K562 (cell line): ENCODE measurements at regions of chr1 and their contacts with region 1.

Region 1: DNA sequence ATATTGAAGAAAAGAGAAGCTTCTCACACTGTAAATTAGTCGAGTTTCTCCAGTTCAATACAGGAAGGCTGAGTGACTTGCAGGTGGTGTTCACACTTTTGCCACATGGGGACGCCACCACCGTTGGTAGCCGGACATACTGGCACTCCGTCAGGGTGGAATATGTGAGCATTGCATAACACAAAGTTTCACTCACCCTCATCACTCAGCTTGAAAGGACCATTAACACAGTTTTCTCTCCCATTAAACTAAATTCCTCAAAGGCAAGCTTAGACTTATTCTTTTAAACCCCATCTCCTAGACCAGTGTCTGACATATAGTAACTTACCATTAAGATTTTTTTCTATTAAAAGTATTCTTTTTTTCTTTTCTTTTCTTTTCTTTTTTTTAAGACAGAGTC is 105.3 kb upstream of the SERBP1 start:
- DNase-seq: peak; percentile 71 to 87 (median 75)
- ATAC-seq: peak; percentile 83
- H3K4me3 ChIP-seq: no peak overlapping the region
- H3K27ac ChIP-seq: no peak overlapping the region
- H3K4me1 ChIP-seq: peaks cover 14 to 18% of the 10 kb centered on the region in 2 experiments; a peak in 4 of 5 replicates
- H3K27me3 ChIP-seq: no peaks in the 10 kb centered on the region
- CTCF ChIP-seq: peak; percentile 93 to 99 (median 96)
- EP300 ChIP-seq: 0 out of 2 replicates have a peak, but pooled peaks have one; percentile 35
- POLR2A ChIP-seq: no peak
- RAD21 ChIP-seq: peak; percentile 88 to 97

Region 2: GRCh38 chr1:67285780-67286488 is 249.5 kb before region 1 on chr1:
- CTCF ChIA-PET with region 1: no interaction called
- POLR2A ChIA-PET with region 1: no interaction called
- in situ Hi-C with region 1: no loop called
- intact Hi-C with region 1: no loop called
- DNase-seq: no peak
- ATAC-seq: no peak
- H3K4me3 ChIP-seq: no peak overlapping the region
- H3K27ac ChIP-seq: no peak overlapping the region
- H3K4me1 ChIP-seq: no peaks in the 10 kb centered on the region
- H3K27me3 ChIP-seq: no peaks in the 10 kb centered on the region
- CTCF ChIP-seq: no peak
- EP300 ChIP-seq: no peak
- POLR2A ChIP-seq: no peak
- RAD21 ChIP-seq: no peak

Region 3: DNA sequence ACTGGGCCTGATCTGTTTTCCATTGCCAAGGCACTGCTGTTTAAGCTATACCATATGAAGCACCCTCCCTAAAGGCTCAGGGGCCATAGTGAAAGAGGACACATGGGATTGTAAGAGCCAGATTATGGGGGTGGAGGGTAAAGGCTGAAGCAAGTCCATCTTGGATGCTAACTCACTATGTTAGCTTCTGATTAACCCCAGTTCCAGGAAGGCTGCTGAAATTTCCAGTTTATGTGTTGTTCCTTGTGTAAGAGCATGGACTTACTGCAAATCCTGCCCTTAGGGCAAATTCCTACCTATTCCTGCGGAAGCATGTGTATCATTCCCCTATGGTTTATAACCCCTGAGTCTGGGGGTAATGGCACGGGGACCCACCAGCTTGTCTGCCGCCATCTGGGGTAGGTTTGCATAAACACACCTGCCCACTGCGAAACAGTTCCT is 13.5 kb before region 1 on chr1:
- CTCF ChIA-PET with region 1: no interaction called
- POLR2A ChIA-PET with region 1: interaction called, 10 read pairs
- in situ Hi-C with region 1: no loop called
- intact Hi-C with region 1: no loop called
- DNase-seq: no peak
- ATAC-seq: no peak
- H3K4me3 ChIP-seq: no peak overlapping the region
- H3K27ac ChIP-seq: no peak overlapping the region
- H3K4me1 ChIP-seq: peaks cover 0 to 6% of the 10 kb centered on the region in 2 experiments; a peak in 2 of 5 replicates
- H3K27me3 ChIP-seq: no peaks in the 10 kb centered on the region
- CTCF ChIP-seq: no peak
- EP300 ChIP-seq: no peak
- POLR2A ChIP-seq: no peak
- RAD21 ChIP-seq: no peak

Region 4: GRCh38 chr1:67760030-67760821 is 224.8 kb after region 1 on chr1:
- CTCF ChIA-PET with region 1: interaction called, 31 read pairs
- POLR2A ChIA-PET with region 1: interaction called, 6 read pairs
- in situ Hi-C with region 1: loop called (anchors 5 kb)
- intact Hi-C with region 1: loop called (anchors 1 kb)
- DNase-seq: peak; percentile 75 to 84 (median 76)
- ATAC-seq: peak; percentile 89
- H3K4me3 ChIP-seq: no peak overlapping the region
- H3K27ac ChIP-seq: peak overlapping the region; percentile 52
- H3K4me1 ChIP-seq: peaks cover 3 to 18% of the 10 kb centered on the region in 2 experiments; a peak in 4 of 5 replicates
- H3K27me3 ChIP-seq: no peaks in the 10 kb centered on the region
- CTCF ChIP-seq: peak; percentile 76 to 92 (median 84)
- EP300 ChIP-seq: 0 out of 2 replicates have a peak, but pooled peaks have one; percentile 14
- POLR2A ChIP-seq: no peak
- RAD21 ChIP-seq: peak; percentile 90 to 98

Region 5: GRCh38 chr1:67853704-67854103 is 318.2 kb after region 1 on chr1:
- CTCF ChIA-PET with region 1: no interaction called
- POLR2A ChIA-PET with region 1: no interaction called
- in situ Hi-C with region 1: no loop called
- intact Hi-C with region 1: loop called (anchors 5 kb)
- DNase-seq: peak; percentile 75 to 78 (median 76)
- ATAC-seq: peak; percentile 95
- H3K4me3 ChIP-seq: no peak overlapping the region
- H3K27ac ChIP-seq: no peak overlapping the region
- H3K4me1 ChIP-seq: no peaks in the 10 kb centered on the region; a peak in 2 of 5 replicates
- H3K27me3 ChIP-seq: no peaks in the 10 kb centered on the region; a peak in 1 of 5 replicates
- CTCF ChIP-seq: peak; percentile 90 to 94 (median 90)
- EP300 ChIP-seq: 0 out of 2 replicates have a peak, but pooled peaks have one; percentile 7
- POLR2A ChIP-seq: no peak
- RAD21 ChIP-seq: peak; percentile 100

Region 6: DNA sequence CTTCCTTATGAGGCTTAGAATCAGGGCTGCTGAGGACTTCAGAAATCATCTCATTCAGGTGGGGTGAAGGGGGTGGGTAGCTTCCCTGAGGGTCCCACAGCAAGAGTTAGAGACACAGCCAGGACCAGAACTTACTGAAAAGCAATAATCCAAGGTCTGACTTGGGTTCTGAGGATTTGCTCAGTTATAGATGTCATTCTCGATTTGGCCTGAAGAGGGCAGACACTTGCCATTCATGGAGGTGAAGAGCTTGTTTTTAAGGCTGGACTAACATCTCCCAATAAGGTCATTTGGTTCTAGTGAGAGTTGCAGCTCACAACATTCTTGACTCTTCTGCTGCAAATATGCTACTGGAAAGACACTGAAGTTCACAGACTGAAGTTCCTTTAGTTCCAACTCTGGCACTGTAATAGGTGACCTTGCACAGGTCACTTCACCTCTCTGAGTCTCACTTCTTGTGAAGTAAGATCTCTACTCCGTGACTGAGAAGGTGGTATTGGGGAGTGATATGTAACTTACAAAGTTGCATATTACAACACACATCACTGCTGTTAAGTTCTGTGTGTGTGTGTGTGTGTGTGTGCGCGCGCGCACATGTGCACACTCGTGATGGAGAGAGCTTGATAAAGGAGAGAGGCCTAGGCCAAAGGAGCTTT is 584.8 kb after region 1 on chr1:
- CTCF ChIA-PET with region 1: no interaction called
- POLR2A ChIA-PET with region 1: no interaction called
- in situ Hi-C with region 1: loop called (anchors 25 kb)
- intact Hi-C with region 1: no loop called
- DNase-seq: peak; percentile 55 to 70 (median 66)
- ATAC-seq: peak; percentile 85
- H3K4me3 ChIP-seq: no peak overlapping the region
- H3K27ac ChIP-seq: no peak overlapping the region
- H3K4me1 ChIP-seq: no peaks in the 10 kb centered on the region
- H3K27me3 ChIP-seq: 0 out of 5 replicates have a peak, but pooled peaks cover 0 to 4% of the 10 kb centered on the region in 2 experiments
- CTCF ChIP-seq: peak; percentile 63 to 85 (median 80)
- EP300 ChIP-seq: no peak
- POLR2A ChIP-seq: no peak
- RAD21 ChIP-seq: peak; percentile 82 to 88

Region 7: GRCh38 chr1:68426594-68426993 is 891.1 kb after region 1 on chr1:
- CTCF ChIA-PET with region 1: no interaction called
- POLR2A ChIA-PET with region 1: no interaction called
- in situ Hi-C with region 1: no loop called
- intact Hi-C with region 1: no loop called
- DNase-seq: no peak
- ATAC-seq: no peak
- H3K4me3 ChIP-seq: no peak overlapping the region
- H3K27ac ChIP-seq: no peak overlapping the region
- H3K4me1 ChIP-seq: no peaks in the 10 kb centered on the region
- H3K27me3 ChIP-seq: no peaks in the 10 kb centered on the region
- CTCF ChIP-seq: no peak
- EP300 ChIP-seq: no peak
- POLR2A ChIP-seq: no peak
- RAD21 ChIP-seq: no peak

Region 8: GRCh38 chr1:68470388-68470970 is 935.0 kb after region 1 on chr1:
- CTCF ChIA-PET with region 1: no interaction called
- POLR2A ChIA-PET with region 1: no interaction called
- in situ Hi-C with region 1: loop called (anchors 25 kb)
- intact Hi-C with region 1: no loop called
- DNase-seq: peak in 1 of 4 experiments; percentile 17
- ATAC-seq: peak; percentile 66; the same call in 2 of the 3 replicates
- H3K4me3 ChIP-seq: no peak overlapping the region
- H3K27ac ChIP-seq: no peak overlapping the region
- H3K4me1 ChIP-seq: no peaks in the 10 kb centered on the region
- H3K27me3 ChIP-seq: no peaks in the 10 kb centered on the region
- CTCF ChIP-seq: peak; percentile 16 to 70 (median 47); a peak in 4 of 6 replicates
- EP300 ChIP-seq: no peak
- POLR2A ChIP-seq: no peak
- RAD21 ChIP-seq: peak; percentile 62 to 64